Activated B cell treated with CpG ODN at 0.5 μM for 24 hours (primary cell): ENCODE measurements at regions of chr19 and their contacts with region 1.

Region 1: DNA sequence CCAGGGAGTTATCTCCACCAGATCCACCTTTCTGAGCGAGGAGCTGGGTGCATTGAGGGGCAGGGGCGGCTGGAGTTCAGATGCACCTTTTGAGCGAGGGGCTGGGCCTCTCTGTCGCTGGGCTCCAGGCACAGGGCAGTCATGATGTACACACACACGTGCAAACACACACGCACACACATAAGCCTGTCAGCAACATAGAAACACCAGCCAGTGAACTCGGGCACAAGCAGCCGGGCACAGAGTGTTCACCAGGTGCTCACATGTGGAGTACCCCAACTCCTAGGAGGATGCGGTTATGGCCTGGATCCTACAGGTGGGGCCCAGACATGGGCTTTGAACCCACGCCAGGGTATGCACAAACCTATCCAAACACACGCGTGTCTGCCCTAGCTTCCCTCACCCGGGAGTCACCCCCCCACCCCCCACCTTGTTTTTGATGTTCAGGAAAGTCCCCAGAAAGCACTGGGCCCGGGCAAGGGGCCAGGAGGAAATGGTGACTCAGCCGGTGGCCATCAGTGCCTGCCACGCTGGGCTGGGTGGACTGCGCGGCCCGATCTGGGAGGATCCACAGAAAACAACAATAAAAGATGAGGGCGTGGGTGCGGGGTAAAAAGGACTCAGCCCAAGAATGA is 13.3 kb downstream of the ARRDC2 start:
- DNase-seq: peak; percentile 68
- ATAC-seq: peak; percentile 23
- H3K4me3 Mint-ChIP-seq: peak overlapping the region; percentile 69
- H3K27ac Mint-ChIP-seq: peak overlapping the region; percentile 97
- H3K4me1 Mint-ChIP-seq: peaks cover 80% of the 10 kb centered on the region
- H3K27me3 Mint-ChIP-seq: no peaks in the 10 kb centered on the region
- CTCF ChIP-seq: no peak

Region 2: GRCh38 chr19:17873786-17874757 is 147.2 kb before region 1 on chr19:
- CTCF ChIA-PET with region 1: no interaction called
- POLR2A ChIA-PET with region 1: interaction called, 16 read pairs
- intact Hi-C with region 1: no loop called
- DNase-seq: peak; percentile 50
- ATAC-seq: peak; percentile 90
- H3K4me3 Mint-ChIP-seq: peak overlapping the region; percentile 59
- H3K27ac Mint-ChIP-seq: no peak overlapping the region
- H3K4me1 Mint-ChIP-seq: peaks cover 21% of the 10 kb centered on the region
- H3K27me3 Mint-ChIP-seq: peaks cover 2% of the 10 kb centered on the region
- CTCF ChIP-seq: no peak

Region 3: DNA sequence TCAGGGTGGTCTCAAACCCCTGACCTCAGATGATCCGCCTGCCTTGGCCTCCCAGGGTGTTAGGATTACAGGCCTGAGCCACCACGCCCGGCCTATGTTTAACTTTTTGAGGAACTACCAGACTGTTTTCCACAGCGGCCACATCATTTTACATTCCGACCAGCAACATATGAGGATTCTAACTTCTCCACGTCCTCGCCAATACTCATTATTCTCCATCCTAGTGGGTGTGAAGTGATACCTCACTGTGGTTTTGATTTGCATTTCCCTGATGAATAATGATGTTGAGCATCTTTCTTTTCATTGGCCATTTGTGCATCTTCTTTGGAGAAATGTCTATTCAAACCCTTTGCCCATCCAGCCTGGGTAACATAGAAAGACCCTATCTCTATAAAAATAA is 134.7 kb before region 1 on chr19:
- CTCF ChIA-PET with region 1: no interaction called
- POLR2A ChIA-PET with region 1: no interaction called
- intact Hi-C with region 1: no loop called
- DNase-seq: no peak
- ATAC-seq: no peak
- H3K4me3 Mint-ChIP-seq: no peak overlapping the region
- H3K27ac Mint-ChIP-seq: no peak overlapping the region
- H3K4me1 Mint-ChIP-seq: peaks cover 35% of the 10 kb centered on the region
- H3K27me3 Mint-ChIP-seq: peaks cover 5% of the 10 kb centered on the region
- CTCF ChIP-seq: no peak

Region 4: DNA sequence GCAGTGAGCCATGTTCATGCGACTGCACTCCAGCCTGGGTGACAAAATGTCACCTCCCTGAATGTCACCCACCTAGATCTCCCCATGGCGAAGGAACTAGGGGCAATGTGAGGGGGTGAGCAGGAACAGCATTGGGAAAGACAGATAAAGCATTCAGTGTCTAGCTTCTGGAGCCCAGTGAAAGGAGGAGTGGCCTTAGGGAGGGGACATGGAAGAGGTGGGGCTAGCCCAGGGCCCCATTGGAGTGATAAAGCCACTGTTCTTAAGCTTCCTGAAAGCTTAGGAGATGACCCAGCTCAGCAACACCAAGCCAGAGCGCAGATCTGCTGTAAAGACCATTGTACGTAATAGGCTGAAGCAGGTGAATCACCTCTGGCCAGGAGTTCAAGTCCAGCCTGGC is 67.4 kb before region 1 on chr19:
- CTCF ChIA-PET with region 1: no interaction called
- POLR2A ChIA-PET with region 1: no interaction called
- intact Hi-C with region 1: no loop called
- DNase-seq: no peak
- ATAC-seq: no peak
- H3K4me3 Mint-ChIP-seq: no peak overlapping the region
- H3K27ac Mint-ChIP-seq: no peak overlapping the region
- H3K4me1 Mint-ChIP-seq: peaks cover 36% of the 10 kb centered on the region
- H3K27me3 Mint-ChIP-seq: peaks cover 37% of the 10 kb centered on the region
- CTCF ChIP-seq: no peak

Region 5: GRCh38 chr19:18007044-18007916 is 14.0 kb before region 1 on chr19:
- CTCF ChIA-PET with region 1: interaction called, 8 read pairs
- POLR2A ChIA-PET with region 1: interaction called, 329 read pairs
- intact Hi-C with region 1: loop called (anchors 1 kb)
- DNase-seq: peak; percentile 83
- ATAC-seq: peak; percentile 61
- H3K4me3 Mint-ChIP-seq: peak overlapping the region; percentile 93
- H3K27ac Mint-ChIP-seq: peak overlapping the region; percentile 92
- H3K4me1 Mint-ChIP-seq: peaks cover 40% of the 10 kb centered on the region
- H3K27me3 Mint-ChIP-seq: no peaks in the 10 kb centered on the region
- CTCF ChIP-seq: peak; percentile 84

Region 6: GRCh38 chr19:18044825-18045304 is 23.6 kb after region 1 on chr19:
- CTCF ChIA-PET with region 1: interaction called, 17 read pairs
- POLR2A ChIA-PET with region 1: interaction called, 779 read pairs
- intact Hi-C with region 1: loop called (anchors 1 kb)
- DNase-seq: peak; percentile 72
- ATAC-seq: peak; percentile 92
- H3K4me3 Mint-ChIP-seq: peak overlapping the region; percentile 78
- H3K27ac Mint-ChIP-seq: peak overlapping the region; percentile 96
- H3K4me1 Mint-ChIP-seq: peaks cover 55% of the 10 kb centered on the region
- H3K27me3 Mint-ChIP-seq: no peaks in the 10 kb centered on the region
- CTCF ChIP-seq: no peak

Region 7: GRCh38 chr19:18091217-18091608 is 70.0 kb after region 1 on chr19:
- CTCF ChIA-PET with region 1: no interaction called
- POLR2A ChIA-PET with region 1: interaction called, 34 read pairs
- intact Hi-C with region 1: loop called (anchors 5 kb)
- DNase-seq: peak; percentile 58
- ATAC-seq: peak; percentile 68
- H3K4me3 Mint-ChIP-seq: peak overlapping the region; percentile 67
- H3K27ac Mint-ChIP-seq: peak overlapping the region; percentile 97
- H3K4me1 Mint-ChIP-seq: peaks cover 60% of the 10 kb centered on the region
- H3K27me3 Mint-ChIP-seq: no peaks in the 10 kb centered on the region
- CTCF ChIP-seq: no peak

Region 8: GRCh38 chr19:18173572-18174288 is 152.5 kb after region 1 on chr19 and contains the start of gene IFI30:
- CTCF ChIA-PET with region 1: no interaction called
- POLR2A ChIA-PET with region 1: interaction called, 5 read pairs
- intact Hi-C with region 1: loop called (anchors 5 kb)
- DNase-seq: peak; percentile 85
- ATAC-seq: peak; percentile 62
- H3K4me3 Mint-ChIP-seq: peak within 1 kb of the TSS; percentile 94
- H3K27ac Mint-ChIP-seq: peak within 1 kb of the TSS; percentile 92
- H3K4me1 Mint-ChIP-seq: peaks cover 90% of the 10 kb centered on the region
- H3K27me3 Mint-ChIP-seq: no peaks in the 10 kb centered on the region
- CTCF ChIP-seq: no peak
- total RNA-seq, gene IFI30: 251 and 255 TPM in 2 replicates

Region 9: DNA sequence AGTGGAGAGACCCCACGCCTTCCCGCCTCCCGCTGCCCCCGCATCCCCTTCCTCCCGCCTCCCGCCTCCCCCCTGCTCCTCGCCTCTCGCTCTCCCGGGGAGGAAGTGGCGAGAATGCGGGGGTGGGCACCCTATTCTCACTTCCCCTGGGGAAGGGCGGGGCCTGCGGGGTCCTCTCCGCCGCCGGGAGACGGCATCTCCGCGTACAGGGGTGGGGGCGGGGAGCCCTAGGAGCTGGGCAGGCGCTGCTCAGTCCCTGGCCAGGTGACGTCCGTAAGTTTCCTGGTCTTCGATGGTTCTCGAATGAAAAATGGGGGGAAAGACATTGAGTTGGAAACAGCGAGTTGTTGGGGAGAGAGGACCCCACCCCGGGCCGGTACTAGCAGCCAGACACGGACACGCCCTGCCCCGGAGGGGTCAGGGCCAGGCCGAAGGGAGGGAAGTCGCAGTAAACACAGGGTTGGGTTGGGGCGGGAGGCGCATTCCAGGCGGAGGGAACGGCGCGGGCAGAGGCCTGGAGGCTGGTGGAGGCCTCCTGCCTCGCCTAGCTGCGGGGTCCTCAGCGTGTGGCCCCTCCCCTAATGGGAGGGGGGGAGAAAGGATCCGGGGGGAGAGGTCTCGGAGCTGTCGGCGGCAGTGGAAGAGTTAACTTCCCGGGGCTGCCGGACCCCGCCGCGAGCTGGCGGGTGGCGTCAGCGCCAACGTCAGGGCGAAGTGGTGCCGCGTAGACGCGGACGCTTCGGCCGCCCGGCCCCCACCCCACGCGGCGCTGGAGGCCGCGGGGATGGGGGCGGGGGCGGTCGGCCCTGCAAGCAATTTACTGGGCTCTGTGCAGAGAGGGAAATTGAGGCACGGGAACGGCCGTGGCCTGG is 270.6 kb after region 1 on chr19:
- CTCF ChIA-PET with region 1: no interaction called
- POLR2A ChIA-PET with region 1: interaction called, 7 read pairs
- intact Hi-C with region 1: loop called (anchors 2 kb)
- DNase-seq: peak; percentile 88
- ATAC-seq: peak; percentile 59
- H3K4me3 Mint-ChIP-seq: peak overlapping the region; percentile 95
- H3K27ac Mint-ChIP-seq: peak overlapping the region; percentile 96
- H3K4me1 Mint-ChIP-seq: peaks cover 60% of the 10 kb centered on the region
- H3K27me3 Mint-ChIP-seq: no peaks in the 10 kb centered on the region
- CTCF ChIP-seq: no peak